ENCODE measurements at regions of chr13 and their contacts with region 1.

Region 1: DNA sequence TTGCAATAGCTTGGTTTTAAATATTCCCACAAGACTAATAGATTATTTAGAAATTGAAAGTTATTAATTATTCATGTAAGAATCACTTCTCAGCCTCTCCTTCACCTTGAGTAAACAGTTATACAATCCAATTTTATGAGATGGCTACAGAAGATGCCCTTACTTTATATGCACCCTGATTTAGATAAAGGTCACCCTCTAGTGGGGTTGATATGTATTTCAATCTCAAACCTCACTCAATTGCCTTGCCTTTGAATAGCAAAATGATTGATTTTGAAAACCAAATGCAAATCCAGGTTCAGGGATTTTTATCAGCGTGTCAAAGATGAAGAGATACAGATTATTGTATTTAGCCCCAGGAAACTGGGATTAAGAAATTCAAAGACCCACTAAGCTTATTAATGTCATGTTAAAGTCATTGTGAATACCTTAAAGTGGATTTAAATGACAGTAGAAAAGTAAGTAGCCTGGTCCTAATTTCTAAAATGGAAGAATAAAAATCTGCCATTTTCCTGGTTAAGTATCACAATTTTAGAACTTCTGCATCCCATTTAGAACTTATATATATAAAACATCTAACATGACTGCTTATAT is 305.1 kb downstream of the ITGBL1 start:
- DNase-seq: no peak
- H3K4me3 ChIP-seq: no peak overlapping the region
- H3K27ac ChIP-seq: no peak overlapping the region
- H3K4me1 ChIP-seq: peaks cover 0 to 10% (median 8%) of the 10 kb centered on the region in 4 experiments; a peak in 4 of 7 replicates
- H3K27me3 ChIP-seq: no peaks in the 10 kb centered on the region
- CTCF ChIP-seq: peak in 2 of 3 experiments; percentile 27 to 54; a peak in 2 of 4 replicates
- EP300 ChIP-seq: no peak
- POLR2A ChIP-seq: no peak
- RAD21 ChIP-seq: peak; percentile 67 to 71

Region 2: GRCh38 chr13:101514788-101515187 is 242.8 kb before region 1 on chr13:
- CTCF ChIA-PET with region 1: interaction called, 25 read pairs
- POLR2A ChIA-PET with region 1: no interaction called
- DNase-seq: no peak
- H3K4me3 ChIP-seq: no peak overlapping the region
- H3K27ac ChIP-seq: no peak overlapping the region
- H3K4me1 ChIP-seq: peaks cover 0 to 8% (median 4%) of the 10 kb centered on the region in 4 experiments; a peak in 4 of 7 replicates
- H3K27me3 ChIP-seq: no peaks in the 10 kb centered on the region
- CTCF ChIP-seq: peak in 2 of 3 experiments; percentile 37 to 41; a peak in 2 of 4 replicates
- EP300 ChIP-seq: no peak
- POLR2A ChIP-seq: no peak
- RAD21 ChIP-seq: peak; percentile 60 to 69

Measured in H1 (cell line).